H1 (cell line): ENCODE measurements at regions of chr6 and their contacts with region 1.

Region 1: GRCh38 chr6:32984605-32985389 is 16.4 kb downstream of the BRD2 start:
- DNase-seq: peak; percentile 60 to 92
- H3K4me3 ChIP-seq: no peak overlapping the region
- H3K27ac ChIP-seq: no peak overlapping the region
- H3K4me1 ChIP-seq: peaks cover 0 to 6% (median 2%) of the 10 kb centered on the region in 4 experiments; a peak in 4 of 7 replicates
- H3K27me3 ChIP-seq: no peaks in the 10 kb centered on the region
- CTCF ChIP-seq: peak; percentile 83 to 94 (median 90)
- EP300 ChIP-seq: no peak
- POLR2A ChIP-seq: peak in 1 of 2 experiments; percentile 38; a peak in 1 of 3 replicates
- RAD21 ChIP-seq: peak; percentile 90 to 94

Region 2: DNA sequence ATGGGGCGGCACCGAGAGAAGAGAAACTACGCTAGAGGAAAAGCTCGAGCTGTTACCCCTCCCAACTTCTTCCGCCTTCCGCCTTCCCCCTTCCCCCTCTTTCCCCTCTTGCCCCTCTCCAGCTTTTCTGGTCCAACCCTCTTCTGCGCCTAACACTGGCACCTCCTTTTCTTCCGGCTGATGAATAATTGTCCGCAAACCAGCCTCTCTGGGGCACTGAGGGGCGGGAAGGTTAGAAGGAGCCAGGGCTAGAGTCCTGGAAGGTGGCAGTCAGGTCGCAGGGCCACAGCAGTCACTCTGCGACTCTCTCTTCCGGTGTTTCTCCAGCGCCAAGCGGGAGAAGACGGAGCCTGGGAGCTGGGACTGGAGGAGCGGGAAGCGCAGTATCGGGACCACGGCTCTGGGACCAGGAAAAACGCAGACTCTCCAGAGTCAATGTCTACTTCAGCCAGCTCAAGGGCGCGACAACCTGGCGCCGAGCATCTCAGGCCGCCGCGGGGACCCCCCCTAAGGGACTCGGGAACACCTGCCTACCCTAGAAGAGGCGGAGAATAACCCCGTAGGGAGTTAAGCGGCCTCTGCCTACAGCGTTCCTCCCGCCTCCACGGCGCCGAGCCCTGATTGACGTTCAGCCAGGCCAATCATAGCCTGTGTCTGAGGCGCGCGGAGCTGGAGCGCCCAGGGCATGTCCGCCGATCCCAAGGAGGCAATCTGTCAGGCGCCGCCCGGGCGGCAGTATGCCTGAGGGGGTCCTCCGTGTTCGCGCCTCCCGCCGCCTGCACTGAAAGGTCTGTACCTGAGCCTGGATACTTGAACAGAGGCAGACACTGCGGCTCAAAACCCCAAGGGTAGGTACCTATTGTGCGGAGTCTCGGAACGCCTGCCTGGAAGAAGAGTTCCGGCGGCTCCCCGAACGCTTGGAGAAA is 90.5 kb before region 1 on chr6:
- CTCF ChIA-PET with region 1: interaction called, 3 read pairs
- POLR2A ChIA-PET with region 1: interaction called, 11 read pairs
- DNase-seq: peak; percentile 84 to 99
- H3K4me3 ChIP-seq: peak overlapping the region; percentile 74 to 92 (median 84)
- H3K27ac ChIP-seq: peak overlapping the region; percentile 39; the same call in 1 of the 2 replicates
- H3K4me1 ChIP-seq: peaks cover 0 to 4% (median 1%) of the 10 kb centered on the region in 4 experiments; a peak in 2 of 7 replicates
- H3K27me3 ChIP-seq: no peaks in the 10 kb centered on the region; a peak in 1 of 7 replicates
- CTCF ChIP-seq: no peak
- EP300 ChIP-seq: no peak
- POLR2A ChIP-seq: peak in 1 of 2 experiments; percentile 69; a peak in 2 of 3 replicates
- RAD21 ChIP-seq: no peak

Region 3: GRCh38 chr6:32940656-32941213 is 44.1 kb before region 1 on chr6 and contains the start of gene HLA-DMB:
- CTCF ChIA-PET with region 1: interaction called, 16 read pairs
- POLR2A ChIA-PET with region 1: interaction called, 5 read pairs
- DNase-seq: peak in 1 of 2 experiments; percentile 62
- H3K4me3 ChIP-seq: peak within 1 kb of the TSS; percentile 6 to 49 (median 26); a peak in 6 of 8 replicates
- H3K27ac ChIP-seq: no peak within 1 kb of the TSS
- H3K4me1 ChIP-seq: peaks cover 0 to 6% (median 1%) of the 10 kb centered on the region in 4 experiments; a peak in 4 of 7 replicates
- H3K27me3 ChIP-seq: no peaks in the 10 kb centered on the region
- CTCF ChIP-seq: no peak
- EP300 ChIP-seq: no peak
- POLR2A ChIP-seq: no peak
- RAD21 ChIP-seq: no peak
- total RNA-seq, gene HLA-DMB: 1.3 and 2.7 TPM in 2 replicates

Region 4: DNA sequence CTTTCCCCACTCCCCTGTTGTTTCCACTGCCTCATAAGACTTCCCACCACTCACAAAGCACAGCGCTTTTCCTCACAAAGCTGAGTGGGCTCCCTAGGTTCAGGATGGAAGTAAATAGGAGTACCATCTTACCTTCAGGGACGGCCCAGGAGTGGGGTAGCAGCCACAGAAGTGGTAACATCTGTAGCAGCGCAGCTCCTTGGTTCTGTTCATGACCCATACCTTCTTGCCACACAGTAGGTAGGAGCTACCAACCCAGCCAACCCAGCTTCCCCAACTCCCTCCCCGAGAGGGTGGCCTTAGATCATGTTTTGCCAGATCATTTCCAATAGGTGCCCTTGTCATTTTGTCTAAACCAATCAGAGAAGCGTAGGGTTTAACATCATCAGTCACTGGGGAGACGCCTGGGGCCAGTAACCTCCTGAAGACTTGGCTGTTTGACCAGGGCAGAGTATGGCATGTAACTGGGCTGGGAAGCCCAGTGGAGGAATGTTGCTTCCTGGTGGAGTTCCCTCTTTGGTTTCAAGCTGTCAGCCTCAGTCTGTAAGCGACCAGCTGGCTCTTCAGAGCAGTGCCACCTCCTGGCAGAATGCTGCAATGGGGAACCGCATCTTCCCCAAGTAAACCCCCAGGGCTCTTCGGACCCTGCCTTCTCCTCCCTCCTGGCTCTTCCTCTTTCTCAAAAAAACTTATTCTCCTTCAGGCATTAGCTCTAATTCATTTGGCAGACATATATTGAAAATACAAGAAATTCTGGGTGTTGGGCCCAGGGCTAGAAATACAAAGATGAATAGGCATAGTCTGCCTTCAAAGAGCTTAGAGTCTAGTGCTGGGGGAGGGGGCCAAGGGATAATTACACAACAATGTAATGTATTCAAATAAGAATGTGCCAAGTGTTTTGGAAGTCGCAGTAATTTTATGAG is 31.7 kb before region 1 on chr6 and contains the start of gene HLA-DMA:
- CTCF ChIA-PET with region 1: interaction called, 41 read pairs
- POLR2A ChIA-PET with region 1: interaction called, 1,158 read pairs
- DNase-seq: peak; percentile 82 to 88
- H3K4me3 ChIP-seq: no peak within 1 kb of the TSS
- H3K27ac ChIP-seq: no peak within 1 kb of the TSS
- H3K4me1 ChIP-seq: peaks cover 0 to 13% (median 3%) of the 10 kb centered on the region in 4 experiments; a peak in 5 of 7 replicates
- H3K27me3 ChIP-seq: no peaks in the 10 kb centered on the region; a peak in 1 of 7 replicates
- CTCF ChIP-seq: peak; percentile 81 to 93 (median 82)
- EP300 ChIP-seq: no peak
- POLR2A ChIP-seq: no peak
- RAD21 ChIP-seq: peak; percentile 38 to 59
- total RNA-seq, gene HLA-DMA: 13.3 and 15.1 TPM in 2 replicates

Region 5: DNA sequence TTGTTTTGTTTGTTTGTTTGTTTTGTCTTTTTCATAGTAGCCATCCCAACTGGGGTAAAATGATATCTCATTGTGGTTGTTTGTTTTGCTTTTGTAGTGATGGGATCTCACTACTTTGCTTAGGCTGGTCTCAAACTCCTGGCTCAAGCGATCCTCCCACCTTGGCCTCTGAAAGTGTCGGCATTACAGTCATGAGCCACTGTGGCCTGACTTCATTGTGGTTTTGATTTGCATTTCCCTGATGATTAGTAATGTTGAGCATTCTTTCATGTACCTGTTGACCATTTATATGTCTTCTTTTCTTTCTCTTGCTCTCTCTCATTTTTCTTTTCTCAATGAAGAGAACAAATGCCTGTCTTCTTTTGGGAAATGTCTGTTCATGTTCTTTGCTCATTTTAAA is 55.4 kb after region 1 on chr6:
- CTCF ChIA-PET with region 1: no interaction called
- POLR2A ChIA-PET with region 1: no interaction called
- DNase-seq: no peak
- H3K4me3 ChIP-seq: no peak overlapping the region
- H3K27ac ChIP-seq: no peak overlapping the region
- H3K4me1 ChIP-seq: no peaks in the 10 kb centered on the region
- H3K27me3 ChIP-seq: no peaks in the 10 kb centered on the region
- CTCF ChIP-seq: no peak
- EP300 ChIP-seq: no peak
- POLR2A ChIP-seq: no peak
- RAD21 ChIP-seq: no peak

Region 6: DNA sequence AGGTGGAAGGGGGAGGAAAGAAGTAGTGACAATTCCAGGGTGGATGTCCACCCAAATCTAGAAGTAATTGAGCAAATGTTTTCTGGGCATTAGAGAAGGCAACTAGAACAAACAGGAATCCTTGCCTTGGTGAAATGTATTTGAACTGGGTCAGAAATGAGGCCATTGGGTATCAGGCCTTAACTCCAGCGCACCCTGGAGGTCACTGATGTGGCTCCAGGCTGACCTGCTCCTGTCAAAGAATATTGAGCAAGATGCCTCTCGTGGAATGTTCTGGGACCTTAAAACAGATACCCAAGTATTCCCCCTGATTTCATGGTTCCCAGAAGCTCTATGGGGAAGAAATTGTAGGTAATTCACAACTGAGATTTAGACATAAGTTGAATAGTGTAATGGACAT is 97.9 kb after region 1 on chr6:
- CTCF ChIA-PET with region 1: interaction called, 4 read pairs
- POLR2A ChIA-PET with region 1: interaction called, 13 read pairs
- DNase-seq: peak in 1 of 2 experiments; percentile 65
- H3K4me3 ChIP-seq: no peak overlapping the region
- H3K27ac ChIP-seq: no peak overlapping the region
- H3K4me1 ChIP-seq: peaks cover 2 to 8% (median 5%) of the 10 kb centered on the region in 4 experiments; a peak in 6 of 7 replicates
- H3K27me3 ChIP-seq: peaks cover 0 to 8% (median 3%) of the 10 kb centered on the region in 4 experiments; a peak in 4 of 7 replicates
- CTCF ChIP-seq: peak; percentile 81 to 86 (median 84)
- EP300 ChIP-seq: no peak
- POLR2A ChIP-seq: no peak
- RAD21 ChIP-seq: peak; percentile 74 to 82